Lower lobe of right lung (tissue), 2 donors: ENCODE measurements at regions of chr10 and their contacts with region 1.

Region 1: GRCh38 chr10:127853868-127854768 is 38.6 kb downstream of the CLRN3 start:
- DNase-seq: peak; percentile 75
- ATAC-seq: peak; percentile 89 to 93
- H3K4me3 ChIP-seq: no peak overlapping the region
- H3K27ac ChIP-seq: no peak overlapping the region
- H3K4me1 ChIP-seq: peaks cover 5% of the 10 kb centered on the region
- H3K27me3 ChIP-seq: peaks cover 5% of the 10 kb centered on the region
- CTCF ChIP-seq: peak; percentile 81

Region 2: DNA sequence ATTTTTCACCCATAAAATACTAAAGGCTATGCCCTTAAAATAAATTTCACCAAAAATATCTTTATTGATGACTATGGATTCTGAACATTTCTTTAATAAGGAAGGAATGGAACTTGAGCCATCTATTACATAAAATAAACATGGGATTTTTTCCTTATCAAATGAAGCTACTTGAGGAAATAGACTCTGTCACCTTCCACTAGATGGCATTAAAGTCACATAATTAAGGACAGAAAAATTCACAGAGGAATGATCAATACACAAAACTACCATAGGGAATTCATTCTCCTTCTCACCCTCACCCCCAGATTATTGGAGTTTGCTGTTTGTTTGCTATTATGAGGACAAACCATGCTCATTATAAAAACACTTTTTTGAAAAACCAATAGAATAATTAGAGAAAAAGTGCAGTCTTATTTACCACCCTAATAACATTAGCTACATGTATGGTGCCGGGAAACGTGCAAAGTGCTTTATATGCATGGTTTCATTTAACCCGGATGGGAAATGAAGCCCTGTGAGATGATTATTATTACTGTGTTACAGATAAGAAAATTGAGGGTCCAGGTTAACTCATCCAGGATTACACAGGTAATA is 138.2 kb before region 1 on chr10:
- intact Hi-C with region 1: loop called (anchors 10 kb)
- DNase-seq: no peak
- ATAC-seq: no peak
- H3K4me3 ChIP-seq: no peak overlapping the region
- H3K27ac ChIP-seq: no peak overlapping the region
- H3K4me1 ChIP-seq: no peaks in the 10 kb centered on the region
- H3K27me3 ChIP-seq: no peaks in the 10 kb centered on the region
- CTCF ChIP-seq: peak; percentile 46

Region 3: DNA sequence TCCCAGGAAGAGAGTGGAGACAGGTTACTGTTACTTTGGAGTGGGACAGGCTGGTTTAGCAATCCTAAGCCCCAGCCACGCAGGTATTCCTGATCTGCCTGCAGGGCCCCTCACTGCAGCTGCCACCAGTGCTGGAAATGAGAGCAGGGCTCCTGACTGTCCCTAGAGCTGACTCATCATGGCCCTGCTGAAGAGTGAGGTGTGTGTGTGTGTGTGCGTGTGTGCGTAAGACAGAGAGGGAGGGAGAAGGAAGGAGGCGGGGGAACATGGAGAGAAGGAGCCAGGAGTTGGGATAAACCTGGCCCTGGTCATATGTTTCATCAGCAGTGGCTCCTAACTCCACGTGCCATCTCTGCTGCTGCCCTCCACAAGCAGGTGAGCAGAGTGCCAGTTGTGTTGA is 113.5 kb before region 1 on chr10:
- intact Hi-C with region 1: no loop called
- DNase-seq: no peak
- ATAC-seq: no peak
- H3K4me3 ChIP-seq: no peak overlapping the region
- H3K27ac ChIP-seq: no peak overlapping the region
- H3K4me1 ChIP-seq: peaks cover 11% of the 10 kb centered on the region
- H3K27me3 ChIP-seq: peaks cover 40% of the 10 kb centered on the region
- CTCF ChIP-seq: no peak